ENCODE measurements at regions of chr17 and their contacts with region 1.

Region 1: DNA sequence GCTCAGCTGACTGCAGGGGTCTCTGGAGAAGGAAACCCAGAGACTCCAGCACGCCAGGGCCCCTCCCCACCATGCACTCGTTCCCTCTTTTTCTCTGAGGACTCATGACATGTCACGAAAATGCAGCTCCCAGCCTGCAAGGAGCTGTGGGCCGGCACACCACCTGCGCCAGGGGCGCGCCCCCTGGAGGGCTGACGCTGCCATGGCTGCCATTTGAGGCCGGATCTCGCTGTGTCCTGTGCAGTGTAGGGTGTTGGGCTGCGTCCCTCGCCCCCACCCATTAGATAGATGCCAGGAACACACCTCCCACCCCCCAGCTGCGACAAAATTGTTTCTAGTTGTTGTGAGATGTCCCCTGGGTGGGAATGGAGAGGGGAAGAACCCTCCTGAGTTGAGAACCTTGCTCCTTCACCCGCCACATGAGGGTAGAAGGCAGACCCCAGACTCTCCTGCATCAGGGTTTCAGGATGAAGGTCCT is 8.2 kb downstream of the SYNGR2 start:
- DNase-seq: peak; percentile 60 to 84 (median 64)
- H3K4me3 ChIP-seq: no peak overlapping the region
- H3K4me3 Mint-ChIP-seq: peak overlapping the region in 1 of 7 donors; percentile 9
- H3K27ac ChIP-seq: no peak overlapping the region
- H3K27ac Mint-ChIP-seq: no peak overlapping the region
- H3K4me1 ChIP-seq: peaks cover 37% of the 10 kb centered on the region
- H3K4me1 Mint-ChIP-seq: peaks cover 29 to 56% (median 42%) of the 10 kb centered on the region in 3 donors
- H3K27me3 ChIP-seq: no peaks in the 10 kb centered on the region
- H3K27me3 Mint-ChIP-seq: no peaks in the 10 kb centered on the region

Region 2: GRCh38 chr17:78112518-78113226 is 63.9 kb before region 1 on chr17:
- CTCF ChIA-PET with region 1: interaction called, 31 read pairs
- POLR2A ChIA-PET with region 1: interaction called, 5 read pairs
- DNase-seq: peak; percentile 69 to 83 (median 71)
- H3K4me3 ChIP-seq: no peak overlapping the region
- H3K4me3 Mint-ChIP-seq: peak overlapping the region in 5 of 7 donors; percentile 49 to 77 (median 71)
- H3K27ac ChIP-seq: no peak overlapping the region
- H3K27ac Mint-ChIP-seq: peak overlapping the region; percentile 23 to 97 (median 85)
- H3K4me1 ChIP-seq: peaks cover 34% of the 10 kb centered on the region
- H3K4me1 Mint-ChIP-seq: peaks cover 35 to 65% (median 35%) of the 10 kb centered on the region in 3 donors
- H3K27me3 ChIP-seq: no peaks in the 10 kb centered on the region
- H3K27me3 Mint-ChIP-seq: peaks cover 0 to 5% of the 10 kb centered on the region in 2 donors

Region 3: DNA sequence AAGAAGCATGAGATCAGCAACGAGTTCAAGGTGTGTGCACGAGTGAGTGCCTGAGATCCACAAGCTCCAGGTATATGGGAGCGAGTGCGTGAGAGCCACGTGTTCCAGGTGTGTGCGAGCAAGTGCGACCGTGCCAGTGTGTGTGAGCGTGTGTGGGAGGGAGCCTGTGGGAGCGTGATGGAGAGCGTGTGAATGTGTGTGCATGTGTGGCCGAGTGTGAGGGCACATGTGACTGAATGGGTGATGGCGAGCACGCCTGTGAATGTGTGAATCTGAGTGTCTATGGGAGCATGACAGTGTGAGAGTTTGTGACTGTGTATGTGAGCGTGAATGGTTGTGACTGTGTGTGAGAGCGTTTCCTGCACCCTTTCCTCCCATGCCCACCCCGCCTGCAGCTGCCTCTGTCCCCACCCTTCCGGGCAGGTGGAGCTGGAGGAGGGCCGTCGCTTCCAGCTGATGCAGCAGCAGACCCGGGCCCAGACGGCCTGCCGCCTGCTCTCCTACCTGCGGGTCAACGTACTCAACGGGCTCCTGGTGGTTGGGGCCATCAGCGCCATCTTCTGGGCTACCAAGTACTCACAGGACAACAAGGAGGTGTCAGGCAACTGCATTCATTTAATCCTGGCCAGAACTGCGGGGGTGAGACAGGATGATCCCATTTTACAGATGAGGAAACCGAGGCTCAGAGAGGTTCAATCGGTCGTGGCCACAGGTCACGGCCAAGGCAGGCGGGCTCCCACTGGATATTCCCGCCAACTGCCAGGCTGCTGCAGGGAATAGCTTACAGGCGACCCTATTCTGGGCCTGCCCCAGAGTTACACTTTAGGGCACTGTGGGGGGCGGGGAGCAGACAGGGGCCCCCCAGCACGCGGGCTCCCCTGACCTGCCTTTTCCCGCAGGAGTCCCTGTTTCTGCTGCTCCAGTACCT is 42.4 kb before region 1 on chr17:
- CTCF ChIA-PET with region 1: interaction called, 21 read pairs
- POLR2A ChIA-PET with region 1: interaction called, 3 read pairs
- DNase-seq: peak; percentile 73 to 90 (median 84)
- H3K4me3 ChIP-seq: peak overlapping the region; percentile 96
- H3K4me3 Mint-ChIP-seq: peak overlapping the region; percentile 79 to 100 (median 85)
- H3K27ac ChIP-seq: no peak overlapping the region
- H3K27ac Mint-ChIP-seq: peak overlapping the region; percentile 71 to 95 (median 88)
- H3K4me1 ChIP-seq: peaks cover 79% of the 10 kb centered on the region
- H3K4me1 Mint-ChIP-seq: peaks cover 62 to 80% (median 70%) of the 10 kb centered on the region in 3 donors
- H3K27me3 ChIP-seq: no peaks in the 10 kb centered on the region
- H3K27me3 Mint-ChIP-seq: peaks cover 0 to 3% of the 10 kb centered on the region in 2 donors

Region 4: DNA sequence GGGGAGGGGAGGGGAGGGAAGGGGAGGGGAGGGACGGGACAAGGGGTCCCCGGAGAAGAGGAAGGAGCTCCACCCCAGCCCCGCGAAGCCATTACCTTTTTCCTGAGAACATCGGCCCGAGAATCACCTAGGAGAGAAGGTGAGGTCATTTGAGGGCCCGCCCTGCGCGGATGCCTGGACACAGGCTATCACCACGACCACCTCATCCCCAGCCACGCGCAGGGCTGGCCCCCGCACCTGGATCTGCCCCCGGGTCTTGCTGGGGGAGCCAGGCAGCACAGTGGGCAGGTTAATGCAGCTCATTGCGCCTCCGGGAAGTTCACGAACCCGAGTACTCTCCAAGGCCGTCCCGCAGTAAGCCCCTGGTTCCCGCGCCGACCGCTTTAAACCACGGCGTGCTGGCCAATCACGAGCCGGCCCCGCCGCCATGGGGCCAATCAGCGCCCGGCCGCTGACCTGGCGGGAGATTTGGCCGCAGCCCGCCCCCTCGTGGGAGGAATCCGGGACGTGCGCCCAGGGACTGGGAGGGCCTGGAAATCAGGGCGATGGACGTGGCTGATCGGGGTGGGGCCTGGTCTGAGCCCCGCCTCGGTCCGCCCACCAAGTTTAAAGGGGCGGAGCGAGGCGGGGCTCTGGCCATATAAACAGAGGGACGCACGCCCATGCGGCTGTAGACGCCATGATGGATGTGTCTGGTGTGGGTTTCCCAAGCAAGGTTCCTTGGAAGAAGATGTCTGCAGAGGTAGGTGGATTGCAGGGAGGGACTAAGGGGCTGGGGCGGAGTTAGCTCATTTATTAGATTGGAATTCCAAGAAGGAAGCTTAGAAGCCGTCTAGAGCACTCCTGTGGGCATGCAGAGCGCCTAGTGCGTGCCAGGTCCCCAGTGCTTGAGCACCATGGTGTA is 10.4 kb after region 1 on chr17 and contains the starts of genes AFMID and TK1:
- CTCF ChIA-PET with region 1: interaction called, 17 read pairs
- POLR2A ChIA-PET with region 1: no interaction called
- DNase-seq: peak; percentile 64 to 81 (median 68)
- H3K4me3 ChIP-seq: peak within 1 kb of the TSS; percentile 76
- H3K4me3 Mint-ChIP-seq: peak within 1 kb of the TSS; percentile 74 to 87 (median 84)
- H3K27ac ChIP-seq: peak within 1 kb of the TSS; percentile 54
- H3K27ac Mint-ChIP-seq: peak within 1 kb of the TSS in 3 of 8 donors; percentile 38 to 82 (median 72)
- H3K4me1 ChIP-seq: peaks cover 6% of the 10 kb centered on the region
- H3K4me1 Mint-ChIP-seq: peaks cover 10 to 18% (median 17%) of the 10 kb centered on the region in 3 donors
- H3K27me3 ChIP-seq: no peaks in the 10 kb centered on the region
- H3K27me3 Mint-ChIP-seq: no peaks in the 10 kb centered on the region
- total RNA-seq, gene AFMID: 24.7 to 30.2 TPM
- total RNA-seq, gene TK1: 84.4 to 86.2 TPM